Posterior vena cava (tissue), 2 donors: ENCODE measurements at regions of chr14 and their contacts with region 1.

Region 1: GRCh38 chr14:100341301-100342031 is 18.3 kb downstream of the SLC25A47 start:
- DNase-seq: no peak

Region 2: GRCh38 chr14:100056964-100057795 is 284.3 kb before region 1 on chr14:
- intact Hi-C with region 1: loop called in 1 of 2 experiments (anchors 10 kb)
- DNase-seq: no peak

Region 3: GRCh38 chr14:100362311-100362927 is 21.0 kb after region 1 on chr14:
- intact Hi-C with region 1: no loop called
- DNase-seq: no peak